Heart right ventricle (tissue), 16 donors: ENCODE measurements at regions of chr11 and their contacts with region 1.

Region 1: DNA sequence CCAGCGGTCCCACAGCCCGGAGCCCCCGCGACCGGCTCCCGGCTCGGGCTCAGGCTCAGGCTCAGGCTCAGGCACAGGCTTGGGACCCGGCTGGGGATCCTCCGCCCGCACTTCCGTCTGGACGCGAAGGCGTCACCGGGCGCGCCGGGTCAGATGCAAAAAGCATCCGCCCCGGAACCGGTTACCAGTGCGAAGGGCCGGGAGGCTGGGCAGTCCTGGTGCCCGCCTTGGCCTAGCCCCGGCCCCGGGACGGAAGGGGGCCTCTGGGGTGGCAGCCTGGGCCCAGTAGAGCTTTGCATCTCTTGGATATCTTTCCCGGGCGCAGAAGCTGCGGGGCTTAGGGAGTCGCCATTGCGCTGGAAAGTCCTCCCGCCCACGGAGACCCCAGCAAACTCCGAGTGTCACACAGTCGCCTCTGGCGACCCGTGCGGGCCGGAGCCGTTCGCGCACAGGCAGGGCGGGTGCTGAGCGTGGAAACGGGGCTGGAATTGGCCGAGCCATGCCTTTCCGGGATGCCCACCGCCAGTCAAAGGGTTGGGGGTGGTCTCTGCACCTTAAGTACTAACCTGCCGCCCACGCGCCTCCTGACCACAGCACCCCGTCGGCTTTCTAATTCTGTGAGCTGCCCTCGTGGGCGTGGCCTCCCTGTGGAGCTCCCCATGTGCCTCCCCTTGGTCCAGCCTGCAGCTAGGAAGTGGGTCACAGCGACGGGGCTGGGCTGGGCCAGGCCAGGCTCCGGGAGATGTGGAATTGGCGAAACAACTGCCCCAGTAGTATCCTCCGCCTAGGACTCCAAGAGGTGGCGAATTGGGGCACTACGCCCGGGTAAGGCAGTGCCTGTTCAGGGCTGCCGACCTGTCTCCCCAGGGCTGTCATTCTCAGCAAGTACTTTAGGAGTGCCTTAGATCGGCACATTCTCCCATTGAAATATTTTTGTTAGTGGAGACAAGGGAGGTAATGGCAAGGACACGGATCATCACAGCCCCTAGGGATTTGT is at the start of gene TMEM9B:
- DNase-seq: peak; percentile 90 to 91
- ATAC-seq: peak; percentile 95 to 98 (median 97)
- H3K4me3 ChIP-seq: peak within 1 kb of the TSS; percentile 67 to 99 (median 85)
- H3K27ac ChIP-seq: peak within 1 kb of the TSS; percentile 74 to 99 (median 98)
- H3K4me1 ChIP-seq: peaks cover 5 to 44% (median 31%) of the 10 kb centered on the region in 9 donors
- H3K27me3 ChIP-seq: no peaks in the 10 kb centered on the region
- CTCF ChIP-seq: no peak
- total RNA-seq, gene TMEM9B: 35.5 to 52.8 (median 47.7) TPM

Region 2: DNA sequence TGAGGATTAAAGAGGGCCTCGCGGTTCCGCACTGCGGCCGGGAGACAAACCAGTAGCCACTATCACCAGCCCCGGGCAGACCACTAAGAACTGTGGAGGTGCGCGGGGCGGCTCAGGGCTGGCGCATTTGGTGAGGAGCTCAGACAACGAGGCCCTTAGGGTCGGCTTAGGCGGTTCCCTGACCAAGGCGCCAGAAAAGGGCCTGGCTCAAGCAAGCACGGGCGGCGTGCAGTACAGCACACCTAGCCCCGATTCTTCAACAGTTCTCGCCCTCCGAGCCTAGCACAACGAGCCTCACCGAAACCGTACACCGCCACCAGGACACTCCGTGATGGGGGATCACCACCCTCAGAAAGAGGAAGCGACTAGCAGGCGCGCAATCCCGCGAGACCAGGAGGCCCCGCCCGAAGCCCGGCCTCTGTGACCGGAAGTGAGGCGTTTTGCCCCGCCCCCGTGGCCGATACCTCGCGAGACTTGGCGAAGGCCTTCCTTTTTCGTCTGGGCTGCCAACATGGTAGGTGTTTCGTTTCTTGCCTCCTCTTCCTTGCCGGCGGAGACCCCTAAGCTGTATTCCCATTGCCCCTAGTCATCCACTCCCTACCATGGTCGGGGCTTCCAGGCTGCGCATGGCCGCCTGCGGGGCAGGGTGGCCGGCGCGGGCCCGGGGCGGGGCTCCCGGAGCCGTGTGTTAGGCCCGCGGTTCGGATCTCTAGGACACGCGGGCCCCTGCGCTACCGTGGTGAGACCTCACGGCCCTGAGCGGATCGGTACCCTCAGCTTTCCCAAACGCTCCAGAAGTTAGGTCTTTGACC is 282.1 kb before region 1 on chr11 and contains the starts of genes RPL27A and TRIM66:
- intact Hi-C with region 1: loop called in 7 of 10 experiments (anchors 5 to 10 kb)
- DNase-seq: peak; percentile 99
- ATAC-seq: peak; percentile 97 to 100 (median 99)
- H3K4me3 ChIP-seq: peak within 1 kb of the TSS; percentile 69 to 99 (median 90)
- H3K27ac ChIP-seq: peak within 1 kb of the TSS; percentile 81 to 97 (median 96)
- H3K4me1 ChIP-seq: peaks cover 6 to 40% (median 30%) of the 10 kb centered on the region in 9 donors
- H3K27me3 ChIP-seq: no peaks in the 10 kb centered on the region
- CTCF ChIP-seq: peak in 4 of 9 donors; percentile 7 to 39 (median 20)
- total RNA-seq, gene RPL27A: 317 to 560 (median 381) TPM
- total RNA-seq, gene TRIM66: 1.8 to 7.4 (median 2.8) TPM

Region 3: DNA sequence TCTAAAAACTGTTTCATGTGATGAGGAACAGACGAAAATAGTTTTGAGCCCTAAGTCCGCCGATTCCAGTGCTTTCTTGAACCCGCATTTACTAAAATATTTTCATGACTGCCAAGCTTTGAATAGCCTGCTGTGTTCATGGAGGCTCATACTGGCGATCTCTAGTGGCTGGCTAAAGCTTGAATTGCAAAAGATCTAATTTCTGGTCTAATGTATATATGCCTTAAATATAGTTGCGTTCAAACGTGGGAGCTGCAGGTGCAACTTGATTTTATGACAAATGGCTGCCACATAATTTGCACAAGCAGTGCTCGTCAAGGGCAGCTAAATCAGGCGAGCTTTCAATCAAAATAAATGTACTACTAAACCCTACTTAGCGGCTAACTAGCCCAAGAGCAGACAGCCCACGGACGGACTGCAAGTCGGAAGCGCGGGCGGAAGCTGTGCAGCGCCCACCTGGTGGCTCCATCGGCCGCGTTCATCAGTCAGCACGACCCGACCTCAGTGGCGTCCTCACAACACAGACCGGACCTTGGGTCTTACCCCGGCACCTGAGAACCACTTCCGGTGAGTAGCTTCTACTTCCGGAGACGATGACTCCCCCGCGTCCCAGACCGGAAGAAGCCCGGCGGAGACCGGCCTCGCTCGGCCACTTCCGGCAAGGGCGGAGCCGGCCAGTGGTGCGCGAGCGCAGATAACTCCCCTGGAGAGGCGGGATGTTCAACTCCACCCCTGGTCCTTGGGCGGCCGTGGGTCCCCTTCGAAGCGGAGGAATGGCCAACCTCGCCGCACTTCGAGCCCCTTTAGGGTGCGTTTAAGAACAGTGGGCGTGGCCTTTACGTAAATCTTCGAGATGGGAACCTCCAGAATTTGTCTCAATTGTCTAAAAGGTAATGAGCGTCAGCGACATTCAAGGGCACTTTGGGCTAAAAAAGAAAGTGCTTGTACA is 275.9 kb before region 1 on chr11:
- intact Hi-C with region 1: loop called in 7 of 10 experiments (anchors 5 to 10 kb)
- DNase-seq: peak; percentile 95
- ATAC-seq: peak; percentile 96 to 99 (median 98)
- H3K4me3 ChIP-seq: peak overlapping the region; percentile 15 to 74 (median 62)
- H3K27ac ChIP-seq: peak overlapping the region; percentile 72 to 90 (median 84)
- H3K4me1 ChIP-seq: peaks cover 9 to 48% (median 30%) of the 10 kb centered on the region in 9 donors
- H3K27me3 ChIP-seq: no peaks in the 10 kb centered on the region
- CTCF ChIP-seq: peak in 4 of 9 donors; percentile 25 to 60 (median 48)

Region 4: DNA sequence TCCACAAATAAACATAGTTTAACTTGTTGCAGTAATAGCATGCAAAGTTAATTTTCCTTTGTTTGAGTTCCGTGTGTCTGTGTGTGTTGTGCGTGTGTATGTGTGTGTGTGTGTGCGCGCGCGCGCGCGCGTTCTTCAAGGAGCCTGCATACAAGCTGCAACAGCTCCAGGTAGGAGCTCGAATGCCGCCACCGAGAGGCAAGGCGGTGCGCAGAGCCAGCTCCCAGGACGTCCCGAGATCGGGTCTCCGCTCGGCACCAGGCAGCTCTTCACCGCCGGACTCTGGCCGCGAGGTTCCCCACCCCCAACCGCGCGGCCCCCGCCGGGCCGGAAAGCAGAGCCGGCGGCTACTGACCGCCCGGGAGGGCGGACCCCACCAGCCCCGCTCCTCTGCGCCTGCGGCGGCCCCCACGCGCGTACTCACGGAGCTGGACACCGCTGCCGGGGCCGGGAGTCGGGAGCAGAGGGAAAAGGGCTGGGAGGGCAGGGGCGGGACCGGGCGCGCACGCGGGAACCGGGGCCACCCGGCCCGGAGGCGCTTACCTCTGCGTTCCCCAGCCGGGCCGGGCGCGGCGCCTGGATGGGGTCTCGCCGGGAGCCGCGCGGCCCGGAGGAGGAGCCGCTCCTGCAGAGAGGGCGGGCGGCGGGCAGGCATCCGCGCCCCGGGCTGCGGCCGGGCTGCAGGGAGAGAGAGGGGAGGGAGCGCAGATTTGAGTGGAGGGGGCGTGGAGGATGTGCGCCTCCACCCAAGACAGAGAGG is 94.0 kb before region 1 on chr11:
- intact Hi-C with region 1: loop called in 2 of 10 experiments (anchors 5 kb)
- DNase-seq: peak; percentile 59
- ATAC-seq: peak; percentile 80 to 90 (median 82)
- H3K4me3 ChIP-seq: peak overlapping the region; percentile 59 to 96 (median 86)
- H3K27ac ChIP-seq: peak overlapping the region; percentile 63 to 93 (median 86)
- H3K4me1 ChIP-seq: peaks cover 0 to 73% (median 32%) of the 10 kb centered on the region in 9 donors
- H3K27me3 ChIP-seq: peaks cover 0 to 38% (median 0%) of the 10 kb centered on the region in 7 donors
- CTCF ChIP-seq: no peak

Region 5: GRCh38 chr11:8899119-8899753 is 65.4 kb before region 1 on chr11:
- intact Hi-C with region 1: no loop called
- DNase-seq: no peak
- ATAC-seq: no peak
- H3K4me3 ChIP-seq: no peak overlapping the region
- H3K27ac ChIP-seq: no peak overlapping the region
- H3K4me1 ChIP-seq: no peaks in the 10 kb centered on the region
- H3K27me3 ChIP-seq: no peaks in the 10 kb centered on the region
- CTCF ChIP-seq: no peak

Region 6: DNA sequence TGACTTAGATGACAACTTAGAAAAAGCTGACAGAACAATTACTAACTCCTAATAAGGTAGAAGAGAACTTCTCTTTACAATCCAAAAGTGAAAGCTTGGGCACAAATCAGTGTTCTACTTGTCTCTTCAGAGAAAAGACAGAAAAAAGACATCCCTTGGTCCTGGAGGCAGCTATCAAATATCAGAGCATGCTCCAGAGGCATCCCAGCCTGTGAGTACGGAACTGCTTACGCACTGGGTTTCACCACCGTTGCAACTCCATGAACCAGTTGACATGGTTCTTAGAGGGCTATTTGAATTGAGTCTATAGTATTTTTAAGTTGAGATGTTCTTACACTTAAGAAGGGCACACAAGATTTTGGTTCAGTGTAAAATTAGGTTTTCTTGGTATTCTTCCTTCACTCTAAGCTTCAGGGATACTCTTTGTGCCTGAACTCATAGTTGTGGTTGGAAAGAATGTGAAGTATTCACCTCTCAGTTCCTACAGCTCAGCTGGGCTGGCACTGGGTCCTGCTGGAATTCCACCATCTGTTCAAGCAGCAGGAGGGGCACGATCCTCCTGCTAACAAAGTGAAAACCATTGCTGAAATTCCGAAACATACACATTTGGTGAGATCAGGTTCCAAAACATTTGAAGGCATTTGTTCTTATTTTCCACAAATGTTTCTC is 47.3 kb before region 1 on chr11:
- intact Hi-C with region 1: loop called in 4 of 10 experiments (anchors 5 kb)
- DNase-seq: no peak
- ATAC-seq: peak in 5 of 8 donors; percentile 49 to 64 (median 58)
- H3K4me3 ChIP-seq: peak overlapping the region in 1 of 10 donors; percentile 21
- H3K27ac ChIP-seq: peak overlapping the region in 6 of 10 donors; percentile 4 to 74 (median 36)
- H3K4me1 ChIP-seq: peaks cover 0 to 40% (median 28%) of the 10 kb centered on the region in 9 donors
- H3K27me3 ChIP-seq: no peaks in the 10 kb centered on the region
- CTCF ChIP-seq: no peak

Region 7: DNA sequence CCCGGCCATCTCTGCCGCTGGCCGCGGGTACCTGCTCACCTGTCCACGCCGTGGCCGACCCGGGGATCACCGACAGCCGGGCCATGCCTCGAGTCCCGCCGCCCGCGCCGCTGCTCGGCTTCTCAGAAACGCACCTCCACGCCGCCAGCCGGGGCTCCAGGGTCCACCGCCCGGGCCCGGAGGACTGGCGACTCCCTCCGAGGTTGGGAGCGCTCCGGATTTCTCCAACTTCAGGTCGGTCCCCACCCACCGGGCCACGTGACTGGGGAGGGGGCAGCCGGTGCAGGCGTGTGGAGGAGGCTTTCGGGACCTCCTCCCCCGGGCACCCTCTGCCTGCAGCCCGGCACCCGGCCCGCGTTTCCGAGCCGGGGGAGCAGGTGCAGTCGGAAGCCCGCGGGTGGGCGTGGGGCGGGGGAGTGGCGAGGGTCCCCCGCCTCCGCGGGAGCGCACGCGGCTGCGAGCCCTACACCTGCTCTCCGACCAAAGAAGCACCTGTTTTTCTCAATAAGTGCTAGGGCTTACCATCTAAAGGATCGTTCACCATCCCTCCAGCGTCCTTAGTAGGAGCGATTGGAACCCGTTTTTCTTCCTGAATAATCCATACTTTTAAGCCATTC is 39.8 kb after region 1 on chr11:
- intact Hi-C with region 1: no loop called
- DNase-seq: peak in 1 of 2 donors; percentile 21
- ATAC-seq: peak in 3 of 8 donors; percentile 11 to 26 (median 14)
- H3K4me3 ChIP-seq: peak overlapping the region; percentile 32 to 56 (median 54)
- H3K27ac ChIP-seq: no peak overlapping the region
- H3K4me1 ChIP-seq: peaks cover 7 to 27% (median 20%) of the 10 kb centered on the region in 9 donors
- H3K27me3 ChIP-seq: peaks cover 0 to 49% (median 25%) of the 10 kb centered on the region in 7 donors
- CTCF ChIP-seq: no peak